GM12878 (cell line): ENCODE measurements at regions of chr20 and their contacts with region 1.

Region 1: DNA sequence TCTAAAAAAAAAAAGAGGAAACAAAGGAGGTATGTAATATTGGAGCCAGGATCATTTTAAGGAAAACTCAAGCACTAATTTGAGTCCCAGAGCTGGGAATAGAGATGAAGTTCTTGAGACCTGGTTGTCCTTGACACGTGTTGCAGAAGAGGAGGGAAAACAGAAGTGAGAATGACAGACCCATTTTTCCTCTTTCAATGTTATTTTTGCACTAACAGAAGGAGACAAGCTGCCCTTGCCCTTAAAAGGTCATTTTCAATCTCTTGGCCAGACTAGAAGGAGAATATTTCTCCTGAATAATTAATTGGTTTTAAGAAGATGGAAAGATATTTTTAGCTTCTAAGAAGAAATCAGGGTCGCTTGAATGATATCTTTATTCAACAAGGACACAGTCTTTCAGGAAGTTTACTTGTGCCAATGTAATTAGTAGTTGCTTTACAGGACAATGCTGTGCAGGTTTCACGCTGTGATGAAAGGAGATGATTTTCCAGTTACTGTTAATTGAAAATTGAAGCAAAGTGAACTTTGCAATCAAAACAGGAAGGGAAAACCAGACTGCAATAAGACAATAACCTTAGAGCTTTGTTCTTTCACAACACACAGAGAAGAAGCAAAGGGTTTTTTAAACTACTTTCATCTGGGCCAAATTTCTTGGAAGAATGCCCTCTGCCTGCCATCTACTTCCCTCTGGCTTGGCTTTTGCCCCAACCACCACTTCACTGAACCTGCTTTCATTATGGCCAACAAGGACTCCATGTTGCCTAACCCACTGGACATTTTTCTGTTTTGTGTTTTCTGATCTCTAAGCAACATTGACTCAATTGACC is 107.8 kb upstream of the SHLD1 start:
- DNase-seq: no peak
- ATAC-seq: no peak
- H3K4me3 ChIP-seq: no peak overlapping the region
- H3K27ac ChIP-seq: peak overlapping the region; percentile 75
- H3K4me1 ChIP-seq: peaks cover 48% of the 10 kb centered on the region
- H3K27me3 ChIP-seq: no peaks in the 10 kb centered on the region
- CTCF ChIP-seq: no peak
- EP300 ChIP-seq: no peak
- POLR2A ChIP-seq: no peak
- RAD21 ChIP-seq: no peak

Region 2: DNA sequence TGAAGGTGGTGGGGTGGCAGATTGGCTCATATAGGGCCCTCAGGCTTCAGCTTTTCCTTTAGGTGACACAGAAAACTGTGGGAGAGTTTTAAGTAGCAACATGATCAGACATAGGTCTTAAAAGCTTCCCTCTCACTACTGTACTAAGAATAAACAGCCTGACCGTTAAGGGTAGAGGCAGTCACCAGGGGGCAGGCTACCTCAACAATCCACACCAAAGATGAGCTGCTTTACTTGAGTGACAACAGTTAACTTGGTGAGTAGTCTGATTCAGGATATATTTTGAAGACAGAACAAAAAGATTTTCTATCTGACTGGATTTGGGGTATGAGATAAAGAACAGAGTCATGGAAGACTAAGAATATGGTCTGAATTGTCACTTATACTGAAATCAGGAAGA is 85.2 kb before region 1 on chr20:
- CTCF ChIA-PET with region 1: interaction called, 5 read pairs
- POLR2A ChIA-PET with region 1: interaction called, 6 read pairs
- RAD21 ChIA-PET with region 1: interaction called, 7 read pairs
- SMC1A ChIA-PET with region 1: interaction called, 26 read pairs
- in situ Hi-C with region 1: no loop called
- intact Hi-C with region 1: no loop called
- DNase-seq: peak; percentile 15
- ATAC-seq: peak; percentile 85
- H3K4me3 ChIP-seq: no peak overlapping the region
- H3K27ac ChIP-seq: no peak overlapping the region; the same call in 1 of the 2 replicates
- H3K4me1 ChIP-seq: no peaks in the 10 kb centered on the region
- H3K27me3 ChIP-seq: no peaks in the 10 kb centered on the region
- CTCF ChIP-seq: peak; percentile 52 to 71 (median 65); a peak in 5 of 6 replicates
- EP300 ChIP-seq: no peak
- POLR2A ChIP-seq: no peak
- RAD21 ChIP-seq: peak; percentile 75

Region 3: DNA sequence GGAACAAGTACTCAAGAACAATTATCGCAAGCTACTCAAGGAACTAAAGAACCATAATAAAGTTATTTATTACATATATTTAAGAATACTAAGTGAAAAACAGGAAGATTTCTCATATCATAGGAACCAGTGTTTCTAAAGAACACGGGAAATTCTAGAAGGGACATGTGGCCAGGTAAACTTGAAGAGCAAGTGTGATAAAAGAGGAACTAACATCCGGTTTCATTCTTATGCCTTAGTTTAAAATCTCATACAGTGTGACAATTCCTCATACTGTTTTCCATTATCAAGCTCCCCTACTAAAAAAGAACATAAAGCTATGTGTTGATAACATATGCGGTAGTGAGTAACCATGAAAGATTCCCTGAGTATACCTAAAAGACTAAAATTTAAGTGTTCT is 55.6 kb before region 1 on chr20:
- CTCF ChIA-PET with region 1: interaction called, 27 read pairs
- POLR2A ChIA-PET with region 1: interaction called, 22 read pairs
- RAD21 ChIA-PET with region 1: interaction called, 95 read pairs
- SMC1A ChIA-PET with region 1: interaction called, 3 read pairs
- in situ Hi-C with region 1: no loop called
- intact Hi-C with region 1: no loop called
- DNase-seq: no peak
- ATAC-seq: peak; percentile 56
- H3K4me3 ChIP-seq: no peak overlapping the region
- H3K27ac ChIP-seq: peak overlapping the region; percentile 44
- H3K4me1 ChIP-seq: peaks cover 44% of the 10 kb centered on the region
- H3K27me3 ChIP-seq: no peaks in the 10 kb centered on the region
- CTCF ChIP-seq: no peak
- EP300 ChIP-seq: no peak
- POLR2A ChIP-seq: no peak
- RAD21 ChIP-seq: no peak

Region 4: DNA sequence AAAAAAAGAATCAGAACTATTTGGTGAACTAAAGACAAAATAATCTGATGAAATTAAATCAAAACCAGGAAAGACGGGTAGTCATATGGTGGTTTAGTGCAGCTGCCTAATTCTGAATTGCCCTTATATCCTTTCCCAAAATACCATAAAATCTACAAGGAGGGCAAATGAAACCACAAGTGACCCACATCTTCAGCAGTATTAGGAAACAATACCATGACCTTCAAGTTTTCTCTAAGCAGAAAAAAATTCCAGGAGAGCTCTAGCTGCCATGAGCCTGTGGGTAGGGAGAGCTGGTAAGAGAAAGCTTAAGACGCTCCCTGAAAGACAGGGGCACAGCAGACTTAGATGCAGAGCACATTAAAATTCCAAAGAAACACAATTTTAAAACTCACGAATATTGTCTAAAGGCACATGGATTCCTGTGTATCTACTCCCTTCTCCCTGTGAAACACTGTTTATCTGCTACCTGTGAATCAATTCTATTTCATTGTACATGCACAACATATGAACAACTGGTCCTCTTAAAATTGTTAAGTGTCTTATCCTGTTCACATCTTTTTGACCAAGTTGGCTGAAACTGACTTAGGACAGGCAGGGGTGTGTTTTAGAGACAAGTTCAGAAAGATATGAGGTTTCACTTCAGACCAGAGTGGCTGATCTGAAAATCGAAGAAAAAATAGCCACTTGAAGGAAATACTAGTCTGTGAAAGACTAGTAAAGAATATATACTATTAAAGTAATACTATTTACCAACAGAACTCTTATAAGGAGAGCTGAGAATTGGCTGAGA is 45.8 kb before region 1 on chr20:
- CTCF ChIA-PET with region 1: interaction called, 27 read pairs
- POLR2A ChIA-PET with region 1: interaction called, 24 read pairs
- RAD21 ChIA-PET with region 1: interaction called, 95 read pairs
- SMC1A ChIA-PET with region 1: no interaction called
- in situ Hi-C with region 1: no loop called
- intact Hi-C with region 1: no loop called
- DNase-seq: no peak
- ATAC-seq: peak; percentile 45
- H3K4me3 ChIP-seq: peak overlapping the region; percentile 48; the same call in 1 of the 2 replicates
- H3K27ac ChIP-seq: peak overlapping the region; percentile 96
- H3K4me1 ChIP-seq: peaks cover 72% of the 10 kb centered on the region
- H3K27me3 ChIP-seq: no peaks in the 10 kb centered on the region
- CTCF ChIP-seq: no peak
- EP300 ChIP-seq: no peak
- POLR2A ChIP-seq: no peak
- RAD21 ChIP-seq: 0 out of 2 replicates have a peak, but pooled peaks have one; percentile 3

Region 5: DNA sequence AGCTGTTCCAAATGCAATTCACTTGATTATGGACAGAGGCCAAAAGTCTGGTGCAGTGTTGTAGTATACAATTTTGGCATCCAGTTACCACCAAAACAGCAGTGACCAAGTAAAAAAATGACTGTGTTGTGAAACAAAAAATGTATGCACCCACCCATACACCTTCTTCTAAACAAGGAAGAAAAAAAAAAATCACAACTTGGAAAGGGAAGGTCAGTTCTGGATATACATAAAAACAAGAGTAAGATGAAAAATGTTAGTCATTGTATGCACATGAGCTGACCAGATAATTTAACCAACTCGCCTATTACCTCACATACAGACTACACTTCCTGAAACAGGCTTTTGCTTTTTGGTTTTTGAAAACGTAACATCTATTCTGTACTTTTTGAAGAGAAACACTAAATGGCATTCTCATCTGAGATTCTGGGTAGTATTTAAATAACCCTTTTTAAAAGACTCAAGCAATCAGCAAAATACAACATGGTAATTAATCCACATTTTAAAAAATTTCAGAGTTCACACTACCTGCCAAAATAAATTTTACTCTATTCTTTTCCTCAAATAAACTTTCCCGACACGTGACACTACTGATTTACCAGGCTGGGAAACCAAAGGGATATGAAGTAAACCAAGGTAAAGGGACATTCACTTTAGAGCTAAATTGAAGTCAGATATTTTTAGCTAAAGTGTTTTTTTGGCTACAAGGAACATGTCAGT is 33.8 kb before region 1 on chr20:
- CTCF ChIA-PET with region 1: interaction called, 24 read pairs
- POLR2A ChIA-PET with region 1: no interaction called
- RAD21 ChIA-PET with region 1: no interaction called
- SMC1A ChIA-PET with region 1: no interaction called
- in situ Hi-C with region 1: no loop called
- intact Hi-C with region 1: no loop called
- DNase-seq: no peak
- ATAC-seq: peak; percentile 15
- H3K4me3 ChIP-seq: peak overlapping the region; percentile 87
- H3K27ac ChIP-seq: peak overlapping the region; percentile 98
- H3K4me1 ChIP-seq: peaks cover 5% of the 10 kb centered on the region; the same call in 1 of the 2 replicates
- H3K27me3 ChIP-seq: no peaks in the 10 kb centered on the region
- CTCF ChIP-seq: no peak
- EP300 ChIP-seq: no peak
- POLR2A ChIP-seq: no peak
- RAD21 ChIP-seq: no peak

Region 6: DNA sequence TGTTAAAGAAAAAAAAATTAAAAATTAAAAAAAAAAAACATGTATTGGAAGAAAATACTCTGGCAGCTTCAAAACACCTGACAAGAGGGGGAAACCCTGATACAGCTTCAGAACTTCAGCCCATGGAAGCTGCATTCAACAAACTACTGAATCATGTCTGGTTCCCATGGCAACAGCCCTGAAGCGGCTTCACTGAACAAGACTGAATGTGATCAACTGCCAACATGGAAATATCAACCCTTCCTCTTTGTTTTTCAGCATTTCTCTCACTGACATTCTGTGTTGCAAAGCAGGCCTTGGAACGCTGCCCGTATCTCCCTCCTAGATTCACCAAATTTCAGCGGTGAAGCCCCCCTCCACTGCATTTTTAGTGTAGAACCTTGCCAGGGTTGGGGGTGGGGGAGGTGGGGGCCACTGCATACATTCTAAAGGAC is 16.6 kb after region 1 on chr20:
- CTCF ChIA-PET with region 1: interaction called, 8 read pairs
- POLR2A ChIA-PET with region 1: interaction called, 32 read pairs
- RAD21 ChIA-PET with region 1: interaction called, 118 read pairs
- SMC1A ChIA-PET with region 1: interaction called, 78 read pairs
- in situ Hi-C with region 1: no loop called
- intact Hi-C with region 1: no loop called
- DNase-seq: no peak
- ATAC-seq: peak; percentile 67
- H3K4me3 ChIP-seq: no peak overlapping the region
- H3K27ac ChIP-seq: no peak overlapping the region
- H3K4me1 ChIP-seq: peaks cover 23% of the 10 kb centered on the region
- H3K27me3 ChIP-seq: no peaks in the 10 kb centered on the region
- CTCF ChIP-seq: no peak
- EP300 ChIP-seq: no peak
- POLR2A ChIP-seq: no peak
- RAD21 ChIP-seq: no peak

Region 7: GRCh38 chr20:5674176-5674660 is 31.9 kb after region 1 on chr20:
- CTCF ChIA-PET with region 1: interaction called, 5 read pairs
- POLR2A ChIA-PET with region 1: no interaction called
- RAD21 ChIA-PET with region 1: interaction called, 20 read pairs
- SMC1A ChIA-PET with region 1: interaction called, 19 read pairs
- in situ Hi-C with region 1: no loop called
- intact Hi-C with region 1: loop called (anchors 1 kb)
- DNase-seq: peak; percentile 94
- ATAC-seq: peak; percentile 97
- H3K4me3 ChIP-seq: no peak overlapping the region
- H3K27ac ChIP-seq: no peak overlapping the region
- H3K4me1 ChIP-seq: peaks cover 21% of the 10 kb centered on the region
- H3K27me3 ChIP-seq: no peaks in the 10 kb centered on the region
- CTCF ChIP-seq: no peak
- EP300 ChIP-seq: no peak
- POLR2A ChIP-seq: no peak
- RAD21 ChIP-seq: no peak